BJ (cell line): ENCODE measurements at regions of chr9 and their contacts with region 1.

Region 1: GRCh38 chr9:32526041-32526706 is at the start of gene RIGI:
- DNase-seq: peak; percentile 59
- H3K4me3 ChIP-seq: peak within 1 kb of the TSS; percentile 68
- H3K27me3 ChIP-seq: no peaks in the 10 kb centered on the region
- CTCF ChIP-seq: peak; percentile 37
- polyA plus RNA-seq, gene RIGI: 2.4 and 5.1 TPM in 2 replicates

Region 2: DNA sequence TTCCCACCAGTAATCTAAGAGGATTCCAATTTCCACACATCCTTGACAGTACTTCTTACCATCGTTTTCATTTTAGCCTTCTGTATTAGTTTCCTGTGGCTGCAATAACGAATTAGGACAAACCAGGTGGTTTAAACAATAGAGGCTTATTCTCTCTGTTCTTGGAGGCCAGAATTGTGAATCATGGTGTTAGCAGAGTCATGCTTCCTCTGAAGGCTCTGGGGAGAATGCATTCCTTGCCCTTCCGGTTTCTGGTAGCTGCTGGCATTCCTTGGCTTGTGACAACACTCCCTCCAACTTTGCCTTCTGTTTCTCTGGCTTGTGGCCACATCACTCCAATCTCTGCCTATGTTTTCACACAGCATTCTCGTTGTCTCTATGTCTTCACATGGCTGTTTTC is 23.7 kb before region 1 on chr9:
- CTCF ChIA-PET with region 1: interaction called, 3 read pairs
- POLR2A ChIA-PET with region 1: interaction called, 14 read pairs
- DNase-seq: no peak
- H3K4me3 ChIP-seq: no peak overlapping the region
- H3K27me3 ChIP-seq: no peaks in the 10 kb centered on the region
- CTCF ChIP-seq: no peak

Region 3: GRCh38 chr9:32723789-32724325 is 197.7 kb after region 1 on chr9:
- CTCF ChIA-PET with region 1: no interaction called
- POLR2A ChIA-PET with region 1: no interaction called
- DNase-seq: no peak
- H3K4me3 ChIP-seq: no peak overlapping the region
- H3K27me3 ChIP-seq: no peaks in the 10 kb centered on the region; the same call in none of the 2 replicates
- CTCF ChIP-seq: no peak

Region 4: DNA sequence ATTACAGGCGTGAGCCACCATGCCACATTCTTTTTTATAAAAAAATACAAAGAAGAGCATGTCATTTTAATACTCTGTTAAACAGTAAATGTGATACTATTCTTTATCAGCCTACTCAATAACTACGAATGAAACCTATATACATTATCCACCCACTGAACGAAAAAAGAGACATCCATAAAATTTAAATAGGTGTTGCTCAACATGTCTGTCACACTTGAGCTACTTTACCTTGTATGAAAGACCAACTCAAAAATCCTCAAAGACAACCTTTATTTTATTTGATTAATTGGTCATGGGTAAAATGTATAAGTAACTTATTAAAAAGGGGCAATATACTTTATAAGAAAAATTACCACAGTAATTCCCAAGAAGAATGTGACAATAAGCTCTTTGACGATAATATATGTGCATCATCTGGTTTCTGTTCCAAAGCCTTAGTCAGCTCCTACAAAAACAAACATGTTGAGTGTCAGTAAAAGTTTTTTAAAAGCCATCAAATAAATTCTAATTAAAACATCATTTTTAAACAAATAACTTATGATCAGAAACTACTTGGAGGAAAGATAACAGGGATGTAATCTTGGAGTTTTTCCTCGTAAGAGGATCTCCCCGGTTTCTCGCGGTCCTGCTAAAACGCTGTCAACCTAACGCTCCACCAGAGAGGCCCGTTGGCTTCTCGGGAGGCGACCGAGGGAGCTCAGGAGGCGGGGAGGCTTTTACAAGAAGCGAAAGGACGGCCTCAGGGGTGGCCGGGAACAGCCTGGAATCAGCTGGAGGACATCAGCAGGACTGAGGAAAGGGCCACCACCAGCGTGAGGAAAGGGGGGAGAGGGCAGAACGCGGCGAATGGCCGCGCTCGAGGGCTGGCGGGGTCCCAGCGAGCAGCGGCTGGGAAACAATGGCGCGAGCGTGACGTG is 984.4 kb after region 1 on chr9:
- CTCF ChIA-PET with region 1: no interaction called
- POLR2A ChIA-PET with region 1: no interaction called
- DNase-seq: no peak
- H3K4me3 ChIP-seq: peak overlapping the region; percentile 58
- H3K27me3 ChIP-seq: no peaks in the 10 kb centered on the region
- CTCF ChIP-seq: no peak